ENCODE measurements at regions of chr1 and their contacts with region 1.

Region 1: DNA sequence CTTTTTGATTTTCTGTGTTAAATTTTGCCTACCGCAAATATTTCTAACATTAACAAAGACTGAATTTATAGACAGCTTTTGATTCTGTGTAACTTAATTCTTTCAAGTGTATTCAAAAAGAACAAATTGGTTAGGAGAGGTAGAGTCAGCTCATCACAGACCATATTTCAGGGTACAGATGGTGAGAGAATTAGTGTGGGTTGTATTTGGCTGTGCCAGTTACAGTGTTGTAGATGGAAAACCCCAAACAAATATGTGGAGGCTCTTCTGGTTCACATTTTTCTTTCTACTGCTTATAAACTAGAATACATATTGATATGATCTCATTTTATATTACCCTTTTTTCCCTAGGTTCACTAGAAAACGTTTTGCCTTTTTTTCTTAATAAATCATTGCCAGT is 11.1 kb downstream of the RCAN3 start:
- DNase-seq: no peak
- ATAC-seq: no peak
- H3K4me3 ChIP-seq: no peak overlapping the region
- H3K27ac ChIP-seq: no peak overlapping the region
- H3K4me1 ChIP-seq: peaks cover 20% of the 10 kb centered on the region
- H3K27me3 ChIP-seq: no peaks in the 10 kb centered on the region
- CTCF ChIP-seq: no peak

Region 2: DNA sequence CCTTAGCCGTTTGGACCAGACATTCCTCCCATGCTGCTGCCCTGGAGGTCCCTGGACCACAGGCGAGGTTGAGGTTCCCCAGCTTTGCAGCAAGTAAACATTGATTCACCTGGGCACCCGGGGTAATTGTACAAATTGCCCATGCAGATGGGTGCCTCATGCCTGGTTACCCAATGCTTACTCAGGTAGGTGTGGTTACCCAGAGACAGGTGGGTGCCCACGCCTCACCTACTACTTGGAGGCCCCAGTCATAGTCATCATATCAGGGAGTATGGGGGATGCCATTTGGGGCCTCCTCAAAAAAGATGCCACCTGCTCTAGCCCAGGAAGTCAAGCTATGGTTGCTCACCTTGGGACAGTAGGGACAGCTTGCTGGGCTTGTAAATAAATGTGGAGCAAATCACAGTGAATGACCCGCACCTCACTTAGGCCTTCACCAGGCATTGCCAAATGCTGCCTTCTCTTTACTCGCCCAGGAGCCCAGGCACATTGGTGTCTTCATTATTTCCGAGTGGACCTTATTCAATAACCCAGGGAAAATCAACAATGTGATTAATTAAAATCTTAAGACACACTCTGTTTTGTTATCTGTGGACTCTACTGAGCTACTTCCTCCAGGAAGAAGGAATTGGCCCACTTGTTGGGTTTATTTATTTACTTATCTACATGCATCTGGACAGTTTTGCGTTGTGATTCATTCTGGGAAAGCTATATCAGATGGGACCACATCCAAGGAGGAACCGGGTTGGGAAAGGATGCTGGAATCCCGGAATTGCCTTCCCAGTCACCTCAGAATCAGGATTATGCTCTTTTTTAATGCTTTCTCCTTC is 230.2 kb before region 1 on chr1:
- CTCF ChIA-PET with region 1: no interaction called
- POLR2A ChIA-PET with region 1: interaction called, 10 read pairs
- intact Hi-C with region 1: no loop called
- DNase-seq: peak; percentile 98
- ATAC-seq: peak; percentile 81
- H3K4me3 ChIP-seq: peak overlapping the region; percentile 44
- H3K27ac ChIP-seq: peak overlapping the region; percentile 98
- H3K4me1 ChIP-seq: peaks cover 47% of the 10 kb centered on the region
- H3K27me3 ChIP-seq: no peaks in the 10 kb centered on the region
- CTCF ChIP-seq: no peak

Region 3: GRCh38 chr1:24406788-24407187 is 106.9 kb before region 1 on chr1:
- CTCF ChIA-PET with region 1: no interaction called
- POLR2A ChIA-PET with region 1: no interaction called
- intact Hi-C with region 1: no loop called
- DNase-seq: no peak
- ATAC-seq: no peak
- H3K4me3 ChIP-seq: no peak overlapping the region
- H3K27ac ChIP-seq: no peak overlapping the region
- H3K4me1 ChIP-seq: peaks cover 30% of the 10 kb centered on the region
- H3K27me3 ChIP-seq: no peaks in the 10 kb centered on the region
- CTCF ChIP-seq: no peak

Region 4: GRCh38 chr1:24567792-24568388 is 54.2 kb after region 1 on chr1:
- CTCF ChIA-PET with region 1: interaction called, 4 read pairs
- POLR2A ChIA-PET with region 1: no interaction called
- intact Hi-C with region 1: loop called (anchors 5 kb)
- DNase-seq: peak; percentile 84
- ATAC-seq: peak; percentile 97
- H3K4me3 ChIP-seq: no peak overlapping the region; the same call in 1 of the 2 replicates
- H3K27ac ChIP-seq: 0 out of 2 replicates have a peak overlapping the region, but pooled peaks have one; percentile 1
- H3K4me1 ChIP-seq: peaks cover 39% of the 10 kb centered on the region
- H3K27me3 ChIP-seq: no peaks in the 10 kb centered on the region
- CTCF ChIP-seq: peak; percentile 51

Region 5: GRCh38 chr1:25895365-25895993 is 1381.8 kb after region 1 on chr1:
- CTCF ChIA-PET with region 1: interaction called, 12 read pairs
- POLR2A ChIA-PET with region 1: no interaction called
- intact Hi-C with region 1: no loop called
- DNase-seq: peak; percentile 92
- ATAC-seq: peak; percentile 76
- H3K4me3 ChIP-seq: no peak overlapping the region
- H3K27ac ChIP-seq: no peak overlapping the region
- H3K4me1 ChIP-seq: peaks cover 39% of the 10 kb centered on the region
- H3K27me3 ChIP-seq: no peaks in the 10 kb centered on the region
- CTCF ChIP-seq: peak; percentile 96

Measured in PC-3 (cell line).